ENCODE measurements at regions of chr3 and their contacts with region 1.

Region 1: DNA sequence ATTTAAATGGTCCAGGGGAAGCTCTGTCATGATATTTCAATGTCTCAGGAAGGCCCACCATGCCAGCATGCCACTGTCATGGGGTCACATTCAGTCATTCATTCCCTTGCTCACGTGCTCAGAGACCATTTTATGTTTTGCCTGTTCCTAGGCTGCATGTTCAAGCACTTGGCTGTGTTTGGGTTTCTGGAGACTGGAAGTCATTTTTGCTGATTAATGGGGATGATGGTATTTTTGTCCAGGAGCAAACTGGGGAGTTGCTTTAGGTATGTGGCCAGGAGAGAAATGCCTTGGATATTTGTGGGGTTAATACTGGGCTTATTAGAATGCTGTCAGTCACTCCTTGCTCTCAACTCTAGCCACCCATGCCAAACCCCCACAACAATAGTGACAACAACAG is 303.5 kb downstream of the PTPRG start:
- DNase-seq: no peak

Region 2: DNA sequence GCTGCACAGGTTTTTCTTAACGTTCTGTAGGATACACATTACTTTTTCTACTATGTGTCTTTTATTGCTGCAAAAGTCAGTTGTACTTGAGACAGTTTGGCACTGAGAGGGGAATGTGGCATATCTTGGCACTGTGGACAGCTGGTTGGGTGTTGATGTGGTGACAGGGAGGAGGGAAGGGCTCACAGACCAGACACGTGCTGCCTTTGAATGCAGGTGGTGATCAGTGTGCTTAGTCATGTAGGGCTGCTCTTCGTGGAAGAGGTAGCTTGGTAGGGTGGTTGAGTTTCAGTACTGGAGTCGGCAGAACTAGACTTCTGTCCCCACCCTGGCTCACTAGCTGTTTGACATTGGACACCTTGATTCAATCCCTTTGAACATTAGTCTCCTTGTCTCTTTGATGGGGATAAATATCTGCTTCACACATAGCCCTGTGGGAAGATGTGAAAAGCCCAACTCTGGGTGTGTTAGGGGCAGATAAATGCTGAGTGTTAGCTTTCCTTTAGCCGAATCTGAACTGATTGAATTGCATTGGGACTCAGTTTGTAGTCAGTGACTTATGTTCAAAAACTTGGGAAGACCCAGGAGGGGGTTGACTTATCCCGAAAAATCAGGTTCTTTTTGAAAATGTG is 195.1 kb before region 1 on chr3:
- intact Hi-C with region 1: no loop called
- DNase-seq: no peak

Region 3: GRCh38 chr3:61912158-61912557 is 47.3 kb after region 1 on chr3:
- intact Hi-C with region 1: loop called (anchors 10 kb)
- DNase-seq: no peak

Region 4: GRCh38 chr3:62131592-62131991 is 266.7 kb after region 1 on chr3:
- intact Hi-C with region 1: loop called (anchors 5 kb)
- DNase-seq: no peak